Stomach (tissue), 19 donors: ENCODE measurements at regions of chr11 and their contacts with region 1.

Region 1: GRCh38 chr11:16613512-16614381 is 124.7 kb upstream of the C11orf58 start:
- DNase-seq: peak; percentile 87 to 96
- H3K4me3 ChIP-seq: peak overlapping the region; percentile 37 to 53 (median 42)
- H3K27ac ChIP-seq: peak overlapping the region; percentile 13 to 59 (median 44)
- H3K4me1 ChIP-seq: peaks cover 17 to 28% (median 23%) of the 10 kb centered on the region in 4 donors
- H3K27me3 ChIP-seq: peaks cover 8 to 89% (median 52%) of the 10 kb centered on the region in 3 donors
- CTCF ChIP-seq: peak in 5 of 7 experiments; percentile 79 to 89 (median 85)
- EP300 ChIP-seq: no peak
- POLR2A ChIP-seq: no peak

Region 2: GRCh38 chr11:15649371-15650104 is 964.2 kb before region 1 on chr11:
- intact Hi-C with region 1: loop called (anchors 5 kb)
- DNase-seq: no peak
- H3K4me3 ChIP-seq: peak overlapping the region in 1 of 4 donors; percentile 50
- H3K27ac ChIP-seq: peak overlapping the region in 4 of 5 donors; percentile 72 to 82 (median 80)
- H3K4me1 ChIP-seq: peaks cover 0 to 29% (median 12%) of the 10 kb centered on the region in 4 donors
- H3K27me3 ChIP-seq: peaks cover 0 to 6% (median 0%) of the 10 kb centered on the region in 3 donors
- CTCF ChIP-seq: no peak
- EP300 ChIP-seq: no peak
- POLR2A ChIP-seq: no peak

Region 3: GRCh38 chr11:16511116-16512114 is 102.3 kb before region 1 on chr11:
- intact Hi-C with region 1: no loop called
- DNase-seq: no peak
- H3K4me3 ChIP-seq: no peak overlapping the region
- H3K27ac ChIP-seq: peak overlapping the region in 1 of 5 donors; percentile 22
- H3K4me1 ChIP-seq: no peaks in the 10 kb centered on the region
- H3K27me3 ChIP-seq: no peaks in the 10 kb centered on the region
- CTCF ChIP-seq: no peak
- EP300 ChIP-seq: no peak
- POLR2A ChIP-seq: no peak

Region 4: DNA sequence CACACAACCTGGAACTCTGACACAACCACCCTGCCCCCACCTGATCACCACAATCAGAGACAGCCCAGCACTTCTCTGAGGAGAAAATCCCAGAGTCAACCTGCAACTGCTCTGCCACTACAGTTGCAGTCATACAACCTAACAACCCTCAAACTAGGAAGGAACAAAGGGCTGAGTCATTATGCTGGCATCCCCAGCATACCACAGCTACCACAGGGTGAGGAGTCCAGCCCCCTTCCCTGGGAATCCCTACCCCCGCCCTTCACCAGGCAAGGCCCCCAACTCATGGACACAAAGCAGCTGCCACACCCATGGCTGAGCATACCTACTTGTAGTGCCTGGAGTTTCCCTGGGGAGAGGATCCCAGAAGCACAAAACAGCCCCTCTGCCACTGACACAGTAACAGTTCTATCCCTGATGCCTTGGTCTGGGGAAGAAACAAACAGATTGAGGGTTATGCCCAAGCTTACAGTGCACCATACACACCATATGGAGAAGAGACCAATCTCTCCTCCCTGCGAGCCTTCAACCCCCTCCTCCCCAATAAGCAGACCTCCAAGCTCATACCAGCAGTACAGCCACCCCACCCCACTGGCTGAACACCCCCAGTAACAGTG is 56.2 kb after region 1 on chr11:
- intact Hi-C with region 1: no loop called
- DNase-seq: no peak
- H3K4me3 ChIP-seq: no peak overlapping the region
- H3K27ac ChIP-seq: no peak overlapping the region
- H3K4me1 ChIP-seq: no peaks in the 10 kb centered on the region
- H3K27me3 ChIP-seq: no peaks in the 10 kb centered on the region
- CTCF ChIP-seq: no peak
- EP300 ChIP-seq: no peak
- POLR2A ChIP-seq: no peak